ENCODE measurements at regions of chr20 and their contacts with region 1.

Region 1: GRCh38 chr20:41738604-41739206 is 120.5 kb upstream of the CHD6 start:
- DNase-seq: no peak
- H3K4me3 Mint-ChIP-seq: no peak overlapping the region
- H3K27ac Mint-ChIP-seq: no peak overlapping the region
- H3K4me1 Mint-ChIP-seq: no peaks in the 10 kb centered on the region
- H3K27me3 Mint-ChIP-seq: no peaks in the 10 kb centered on the region

Region 2: DNA sequence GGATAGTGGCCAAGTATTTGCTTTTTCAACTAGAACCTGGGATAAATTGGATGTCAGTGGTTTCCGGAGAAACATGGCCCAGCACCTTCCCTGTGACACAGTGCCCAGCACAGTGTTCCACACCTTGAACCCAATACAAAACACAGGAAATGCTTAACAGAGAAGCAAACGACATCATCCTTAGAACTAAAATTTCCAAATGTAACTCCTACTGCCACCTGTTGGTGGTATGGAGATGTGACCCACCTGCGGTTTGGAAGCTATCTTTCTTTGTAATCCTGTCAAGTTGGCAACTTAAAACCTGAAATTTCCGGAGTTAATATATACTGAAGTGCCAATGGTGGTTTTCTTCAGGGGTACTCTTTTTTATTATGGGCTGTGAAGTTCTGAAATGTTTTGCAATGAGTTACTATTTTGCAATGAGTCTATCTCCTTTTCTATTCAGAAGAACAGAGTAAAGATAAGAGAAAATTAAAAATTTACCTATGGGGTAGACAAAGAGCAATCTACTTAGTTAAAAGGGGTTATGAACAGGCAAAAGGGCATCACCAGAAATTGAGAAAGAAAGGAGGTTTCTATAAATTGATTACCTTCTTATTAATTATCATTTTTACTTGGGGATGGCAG is 792.2 kb after region 1 on chr20:
- intact Hi-C with region 1: loop called (anchors 10 kb)
- DNase-seq: no peak
- H3K4me3 Mint-ChIP-seq: no peak overlapping the region
- H3K27ac Mint-ChIP-seq: no peak overlapping the region
- H3K4me1 Mint-ChIP-seq: no peaks in the 10 kb centered on the region
- H3K27me3 Mint-ChIP-seq: no peaks in the 10 kb centered on the region

Region 3: DNA sequence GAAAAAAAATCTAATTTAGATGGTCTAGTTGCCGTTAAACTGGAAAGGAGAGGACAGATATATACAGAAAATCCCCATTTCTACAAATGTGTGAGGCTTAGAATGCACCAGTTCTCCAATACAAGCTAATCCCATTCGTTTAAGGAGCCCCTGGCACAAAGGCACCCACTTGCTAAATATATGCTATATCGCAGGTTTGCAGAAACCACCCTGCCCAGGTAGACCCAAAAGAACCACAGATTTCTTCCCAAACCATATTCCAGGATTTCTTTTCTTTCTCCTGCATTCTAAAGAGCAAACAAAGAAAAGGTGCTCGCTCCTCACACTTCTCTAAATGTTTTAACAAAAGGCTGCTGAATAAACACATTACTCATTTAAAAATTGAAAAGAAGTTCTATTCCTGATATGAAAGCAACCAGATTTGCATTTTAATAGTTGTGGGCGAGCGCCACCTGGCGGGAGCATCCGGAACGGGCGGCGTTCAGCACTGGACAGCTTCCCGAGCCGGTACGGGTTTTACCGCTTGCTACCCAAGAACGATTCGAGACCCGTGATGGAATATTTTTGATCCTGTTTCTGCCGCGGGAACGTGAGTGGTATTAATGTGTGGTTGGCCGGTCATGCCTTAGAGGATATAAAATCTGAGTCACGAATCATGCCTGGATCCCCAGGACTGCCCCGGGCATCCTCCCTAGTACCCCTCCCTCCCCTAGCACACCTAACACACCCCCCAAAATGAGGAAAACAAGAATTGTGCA is 1449.0 kb after region 1 on chr20:
- intact Hi-C with region 1: loop called (anchors 5 kb)
- DNase-seq: peak; percentile 53
- H3K4me3 Mint-ChIP-seq: no peak overlapping the region
- H3K27ac Mint-ChIP-seq: no peak overlapping the region
- H3K4me1 Mint-ChIP-seq: peaks cover 2% of the 10 kb centered on the region
- H3K27me3 Mint-ChIP-seq: peaks cover 34% of the 10 kb centered on the region

Measured in activated T-helper 2 cell treated with anti-CD3 and anti-CD28 coated beads, Interferon-gamma antibody, Interleukin-2, Interleukin-4, amounts not matched to agents 10 μg/mL and 5 μg/mL and 100 μg/mL, durations not matched to agents 14 hours and 24 hours and 36 hours (primary cell).